ENCODE measurements at regions of chr2 and their contacts with region 1.

Region 1: GRCh38 chr2:166180951-166181812 is 53.4 kb upstream of the SCN1A start:
- DNase-seq: peak; percentile 29
- H3K4me3 ChIP-seq: no peak overlapping the region
- CTCF ChIP-seq: peak; percentile 64

Region 2: GRCh38 chr2:166223298-166223697 is 42.1 kb after region 1 on chr2:
- in situ Hi-C with region 1: no loop called
- DNase-seq: no peak
- H3K4me3 ChIP-seq: no peak overlapping the region
- CTCF ChIP-seq: no peak

Region 3: GRCh38 chr2:166375736-166376487 is 194.7 kb after region 1 on chr2 and contains the start of gene SCN9A:
- in situ Hi-C with region 1: loop called (anchors 25 kb)
- DNase-seq: peak; percentile 15
- H3K4me3 ChIP-seq: peak within 1 kb of the TSS; percentile 63
- CTCF ChIP-seq: no peak